AG04450 (cell line): ENCODE measurements at regions of chr14 and their contacts with region 1.

Region 1: DNA sequence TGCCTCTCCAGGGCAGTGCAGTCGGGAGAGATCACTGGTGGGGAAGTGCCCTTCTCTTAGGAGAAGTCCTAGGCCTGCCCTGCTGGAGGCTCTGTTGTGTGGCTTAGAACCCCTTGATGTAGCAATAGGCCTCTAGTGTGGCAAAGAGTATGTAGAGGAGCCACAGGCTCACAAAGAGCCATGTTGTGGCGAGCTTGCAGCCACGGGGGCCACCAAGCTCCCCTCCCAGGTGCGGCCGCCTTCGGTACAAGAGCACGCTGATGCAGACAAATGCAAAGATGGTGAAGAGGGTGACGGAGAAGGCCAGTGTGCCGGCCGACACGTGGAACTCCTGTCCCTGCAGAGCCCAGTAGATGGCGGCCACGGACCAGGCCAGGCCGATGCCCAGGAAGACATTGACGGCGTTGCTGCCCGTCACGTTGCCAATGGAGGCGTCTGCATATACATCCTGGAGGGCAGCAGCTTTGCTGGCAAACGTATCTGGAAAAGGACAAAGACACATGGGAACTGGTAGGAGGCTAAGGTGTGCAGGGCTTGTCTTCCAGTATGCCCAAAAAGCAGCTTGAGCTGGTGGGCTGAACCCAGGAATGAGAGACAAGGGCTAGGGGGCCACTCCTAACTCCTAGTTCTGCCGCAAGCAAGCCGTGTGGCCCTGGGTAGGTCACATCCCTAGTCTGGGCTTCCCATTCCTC is 142.8 kb downstream of the SLC8A3 start:
- DNase-seq: peak; percentile 13
- H3K4me3 ChIP-seq: no peak overlapping the region
- H3K27ac ChIP-seq: no peak overlapping the region
- H3K27me3 ChIP-seq: peaks cover 21% of the 10 kb centered on the region
- CTCF ChIP-seq: peak; percentile 68

Region 2: DNA sequence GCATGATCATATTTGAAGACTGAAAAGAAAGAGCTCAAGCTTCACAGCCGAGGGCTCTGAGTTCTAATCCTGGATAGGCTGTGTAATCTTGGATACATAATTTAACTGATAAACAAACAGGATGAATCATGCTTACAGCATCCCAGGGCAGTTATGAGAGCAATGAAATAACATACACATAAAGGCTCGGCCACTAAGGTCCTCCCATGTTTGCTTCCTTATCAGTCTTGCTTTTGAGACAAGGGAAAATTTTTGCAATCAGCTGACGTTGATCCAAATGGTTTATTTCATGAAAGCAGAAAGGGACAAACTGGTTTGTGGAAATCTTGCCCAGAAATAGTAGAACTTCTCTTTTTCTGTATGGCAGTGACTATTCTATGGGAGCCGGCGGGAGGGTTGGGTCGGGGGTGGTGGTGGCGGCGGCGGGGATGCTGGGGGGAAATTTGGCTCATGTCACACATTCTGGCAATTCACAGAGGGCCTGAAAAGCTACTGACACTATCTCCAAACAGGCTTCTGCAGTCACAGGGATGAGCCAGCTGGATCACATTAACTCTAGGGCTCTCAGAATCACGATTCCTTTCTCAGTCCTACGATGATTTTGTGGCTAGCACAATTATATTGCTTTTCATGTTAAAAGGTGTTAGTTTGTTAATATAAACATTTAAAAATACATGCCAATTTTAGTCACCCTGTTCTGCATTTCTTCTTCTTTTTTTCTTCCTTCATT is 18.3 kb after region 1 on chr14:
- CTCF ChIA-PET with region 1: interaction called, 12 read pairs
- POLR2A ChIA-PET with region 1: no interaction called
- DNase-seq: no peak
- H3K4me3 ChIP-seq: no peak overlapping the region
- H3K27ac ChIP-seq: no peak overlapping the region
- H3K27me3 ChIP-seq: peaks cover 12% of the 10 kb centered on the region
- CTCF ChIP-seq: no peak

Region 3: GRCh38 chr14:70073924-70074566 is 28.1 kb after region 1 on chr14:
- CTCF ChIA-PET with region 1: interaction called, 28 read pairs
- POLR2A ChIA-PET with region 1: no interaction called
- DNase-seq: peak; percentile 24
- H3K4me3 ChIP-seq: no peak overlapping the region
- H3K27ac ChIP-seq: no peak overlapping the region
- H3K27me3 ChIP-seq: peaks cover 10% of the 10 kb centered on the region
- CTCF ChIP-seq: peak; percentile 89